GM10248 (cell line): ENCODE measurements at regions of chr14 and their contacts with region 1.

Region 1: GRCh38 chr14:102774391-102775153 is 2.7 kb upstream of the TRAF3 start:
- DNase-seq: peak; percentile 78
- CTCF ChIP-seq: peak; percentile 68

Region 2: DNA sequence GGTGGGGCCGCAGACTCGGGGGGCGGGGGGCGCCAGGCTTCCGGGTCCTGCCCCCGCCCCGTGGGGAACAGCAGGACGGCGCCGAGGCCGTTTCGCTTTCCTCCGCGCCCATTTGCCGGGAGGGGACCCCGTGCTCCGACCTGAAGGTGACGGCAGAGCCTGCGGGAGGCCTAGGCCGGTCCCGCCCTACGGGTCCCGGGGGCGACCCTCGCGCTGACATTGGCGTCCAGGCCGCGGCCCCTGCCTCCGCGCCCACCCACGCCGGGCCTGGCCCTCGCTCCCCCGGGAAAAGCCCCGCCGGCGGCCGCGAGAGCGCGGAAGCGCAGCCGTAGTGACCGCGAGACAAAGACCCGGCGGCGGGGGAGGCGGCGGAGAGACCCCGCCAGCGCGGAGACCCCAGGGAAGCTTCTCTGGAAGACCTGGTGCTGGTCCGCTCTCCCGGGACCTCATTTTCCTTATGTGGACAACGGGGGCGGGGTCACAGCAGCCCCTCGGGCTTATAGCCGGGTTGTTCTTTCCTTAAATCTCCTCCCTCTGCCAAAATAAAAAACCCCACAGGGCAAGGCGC is 219.2 kb before region 1 on chr14:
- CTCF ChIA-PET with region 1: no interaction called
- POLR2A ChIA-PET with region 1: no interaction called
- DNase-seq: peak; percentile 80
- CTCF ChIP-seq: no peak

Region 3: DNA sequence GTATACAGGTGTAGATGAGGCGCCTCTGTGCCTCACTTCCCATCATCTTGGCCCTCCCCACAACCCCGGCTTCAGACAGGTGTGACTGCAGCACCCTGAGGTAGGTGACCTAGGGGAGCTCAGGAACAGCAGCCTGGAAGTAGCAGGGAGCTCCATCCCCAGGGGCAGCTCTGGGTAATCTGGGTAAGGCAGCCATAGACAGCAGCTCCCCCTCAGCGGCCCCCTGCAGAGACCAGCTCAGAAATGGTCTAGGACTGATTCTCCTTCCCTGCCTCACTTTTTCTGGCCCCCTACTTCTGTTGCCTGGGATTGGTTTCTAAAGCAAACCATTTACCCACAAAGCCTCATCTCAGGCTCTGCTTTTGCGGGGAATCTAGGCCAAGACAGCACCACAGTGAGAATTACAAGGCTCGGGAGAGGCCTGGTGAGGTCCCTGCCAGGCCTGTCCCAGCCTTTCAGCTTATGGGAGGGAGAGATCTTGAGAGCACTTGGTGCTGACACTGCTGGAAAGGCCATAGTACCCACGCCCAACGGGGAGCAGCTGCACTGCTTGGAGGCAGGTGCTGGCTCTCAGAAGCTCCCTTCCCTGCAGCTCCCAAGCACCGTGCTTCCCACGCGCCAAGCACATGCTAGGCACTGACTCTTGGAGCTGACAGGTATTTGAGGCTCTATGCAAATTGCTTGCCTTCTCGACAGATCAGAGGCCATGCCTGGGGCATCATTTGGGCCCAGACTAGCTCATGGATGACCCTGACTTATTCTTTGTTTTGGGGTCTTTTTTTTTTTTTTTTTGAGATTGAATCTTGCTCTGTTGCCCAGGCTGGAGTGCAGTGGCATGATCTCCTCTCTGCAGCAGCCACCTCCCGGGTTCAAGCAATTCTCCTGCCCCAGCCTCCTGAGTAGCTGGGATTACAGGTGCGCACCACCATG is 42.4 kb before region 1 on chr14:
- CTCF ChIA-PET with region 1: no interaction called
- POLR2A ChIA-PET with region 1: no interaction called
- DNase-seq: no peak
- CTCF ChIP-seq: no peak

Region 4: GRCh38 chr14:102764220-102764671 is 10.3 kb before region 1 on chr14:
- CTCF ChIA-PET with region 1: interaction called, 15 read pairs
- POLR2A ChIA-PET with region 1: interaction called, 6 read pairs
- DNase-seq: peak; percentile 83
- CTCF ChIP-seq: no peak